OCI-LY7 (cell line): ENCODE measurements at regions of chrX and their contacts with region 1.

Region 1: GRCh38 chrX:48696301-48697181 is at the start of gene SUV39H1:
- DNase-seq: peak; percentile 91
- H3K4me3 ChIP-seq: peak within 1 kb of the TSS; percentile 98
- H3K27ac ChIP-seq: peak within 1 kb of the TSS; percentile 75
- H3K4me1 ChIP-seq: peaks cover 17% of the 10 kb centered on the region
- CTCF ChIP-seq: no peak
- total RNA-seq, gene SUV39H1: 21.1 and 27.0 TPM in 2 replicates

Region 2: GRCh38 chrX:48569958-48570357 is 126.6 kb before region 1 on chrX:
- CTCF ChIA-PET with region 1: no interaction called
- POLR2A ChIA-PET with region 1: no interaction called
- intact Hi-C with region 1: no loop called
- DNase-seq: no peak
- H3K4me3 ChIP-seq: no peak overlapping the region
- H3K27ac ChIP-seq: no peak overlapping the region
- H3K4me1 ChIP-seq: peaks cover 15% of the 10 kb centered on the region
- CTCF ChIP-seq: no peak

Region 3: GRCh38 chrX:48648336-48648751 is 48.2 kb before region 1 on chrX:
- CTCF ChIA-PET with region 1: no interaction called
- POLR2A ChIA-PET with region 1: no interaction called
- intact Hi-C with region 1: loop called (anchors 2 kb)
- DNase-seq: peak; percentile 71
- H3K4me3 ChIP-seq: no peak overlapping the region
- H3K27ac ChIP-seq: no peak overlapping the region
- H3K4me1 ChIP-seq: peaks cover 7% of the 10 kb centered on the region
- CTCF ChIP-seq: peak; percentile 71

Region 4: GRCh38 chrX:48683411-48683982 is 13.0 kb before region 1 on chrX and contains the start of gene WAS:
- CTCF ChIA-PET with region 1: no interaction called
- POLR2A ChIA-PET with region 1: interaction called, 7 read pairs
- intact Hi-C with region 1: loop called (anchors 1 kb)
- DNase-seq: peak; percentile 82
- H3K4me3 ChIP-seq: peak within 1 kb of the TSS; percentile 97
- H3K27ac ChIP-seq: peak within 1 kb of the TSS; percentile 61
- H3K4me1 ChIP-seq: peaks cover 34% of the 10 kb centered on the region
- CTCF ChIP-seq: no peak
- total RNA-seq, gene WAS: 43.9 and 44.8 TPM in 2 replicates

Region 5: DNA sequence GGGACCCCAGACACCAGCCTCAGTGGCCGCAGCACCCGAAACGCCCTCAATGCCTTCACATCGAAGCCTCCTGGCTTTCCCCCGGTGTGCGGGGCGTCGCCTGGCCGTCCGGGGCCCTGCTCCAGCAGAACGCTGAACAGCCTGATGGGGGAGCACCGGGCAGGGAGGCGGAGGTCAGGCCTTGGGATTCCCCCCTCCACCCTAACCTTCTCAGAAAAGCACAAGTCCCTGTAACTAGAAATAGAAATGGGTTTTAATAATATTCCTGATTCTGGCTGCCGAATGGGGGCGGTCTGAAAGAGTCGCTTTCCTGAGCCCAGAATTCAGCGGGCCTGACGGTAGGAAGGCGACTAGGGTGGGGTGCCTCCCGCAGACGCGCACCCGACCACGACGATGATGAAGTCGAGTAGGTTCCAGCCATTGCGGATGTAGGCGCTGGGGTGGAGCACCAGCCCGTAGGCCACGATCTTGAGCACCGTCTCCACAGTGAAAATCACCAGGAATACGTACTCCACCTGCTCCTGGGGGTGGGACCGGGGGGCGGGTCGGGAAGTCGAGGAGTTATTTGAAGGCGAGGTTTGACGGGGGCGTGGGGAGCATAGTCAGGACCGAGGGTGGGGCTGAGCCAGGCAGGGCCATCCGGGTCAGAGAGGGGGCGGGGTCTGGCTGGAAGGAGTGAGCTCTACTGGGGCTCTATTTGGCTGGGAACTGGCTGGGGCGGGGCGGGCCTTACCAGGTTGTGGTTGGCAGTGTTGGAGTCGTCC is 534.1 kb after region 1 on chrX:
- CTCF ChIA-PET with region 1: no interaction called
- POLR2A ChIA-PET with region 1: no interaction called
- intact Hi-C with region 1: no loop called
- DNase-seq: no peak
- H3K4me3 ChIP-seq: no peak overlapping the region
- H3K27ac ChIP-seq: no peak overlapping the region
- H3K4me1 ChIP-seq: no peaks in the 10 kb centered on the region
- CTCF ChIP-seq: no peak